Panc1 (cell line): ENCODE measurements at regions of chr17 and their contacts with region 1.

Region 1: DNA sequence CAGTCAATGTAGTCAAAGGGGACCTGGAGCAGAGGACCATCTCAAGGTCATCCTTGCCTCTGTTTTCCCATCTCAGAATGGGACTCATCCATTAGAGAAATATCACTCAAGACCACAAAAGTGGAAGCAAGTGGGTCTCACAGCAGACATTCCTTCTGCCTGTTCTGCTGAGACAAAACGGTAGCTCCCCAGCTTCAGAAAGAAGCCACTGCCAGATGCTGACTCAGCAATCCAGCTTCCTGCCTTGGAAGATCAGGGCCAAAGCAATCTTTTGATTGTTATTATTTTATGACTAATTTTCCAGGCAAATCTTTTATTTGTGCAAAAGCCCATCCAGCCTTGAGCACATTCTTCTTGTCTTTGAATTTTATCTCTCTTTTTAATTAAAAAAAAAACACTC is 86.8 kb downstream of the CCT6B start:
- DNase-seq: no peak
- ATAC-seq: no peak
- H3K4me3 ChIP-seq: no peak overlapping the region
- H3K27ac ChIP-seq: no peak overlapping the region
- H3K4me1 ChIP-seq: no peaks in the 10 kb centered on the region
- H3K27me3 ChIP-seq: no peaks in the 10 kb centered on the region; the same call in 1 of the 2 replicates
- CTCF ChIP-seq: no peak

Region 2: DNA sequence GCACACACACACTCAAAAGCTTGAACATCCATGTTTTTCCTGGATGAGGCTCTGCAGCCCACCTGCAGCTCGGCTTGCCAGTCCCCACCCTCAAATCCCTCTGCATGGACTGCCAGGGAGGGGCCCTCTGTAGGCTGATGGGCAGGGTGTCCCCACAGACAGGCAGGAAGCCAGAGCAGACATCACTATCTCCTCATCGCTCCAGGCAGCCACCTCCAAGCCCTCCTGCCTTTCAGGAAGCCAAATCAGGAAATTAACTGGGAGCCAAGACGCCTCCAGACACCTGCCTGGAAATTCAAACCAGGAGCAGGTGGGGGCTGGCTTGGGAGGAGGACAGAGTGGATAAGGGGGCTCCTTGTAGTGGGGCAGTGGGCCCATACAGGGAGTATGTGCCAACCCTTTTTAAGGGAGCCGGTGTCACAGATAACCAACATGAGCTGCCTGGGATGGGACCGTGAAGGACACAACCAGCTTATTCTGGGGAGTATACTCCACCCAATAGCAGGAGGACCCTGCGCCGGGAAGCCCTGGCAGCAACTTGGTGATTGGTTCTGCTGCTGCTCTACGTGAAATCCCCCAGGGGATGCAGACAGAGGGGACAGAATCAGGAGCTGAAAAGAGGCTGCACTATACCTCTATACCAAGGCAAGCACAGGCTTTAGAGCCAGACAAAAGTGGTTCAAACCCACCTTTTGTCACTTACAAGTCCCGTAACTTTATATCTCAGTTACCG is 52.3 kb before region 1 on chr17:
- CTCF ChIA-PET with region 1: interaction called, 10 read pairs
- POLR2A ChIA-PET with region 1: no interaction called
- in situ Hi-C with region 1: no loop called
- intact Hi-C with region 1: no loop called
- DNase-seq: no peak
- ATAC-seq: no peak
- H3K4me3 ChIP-seq: no peak overlapping the region
- H3K27ac ChIP-seq: no peak overlapping the region
- H3K4me1 ChIP-seq: no peaks in the 10 kb centered on the region; the same call in 1 of the 2 replicates
- H3K27me3 ChIP-seq: no peaks in the 10 kb centered on the region; the same call in 1 of the 2 replicates
- CTCF ChIP-seq: no peak

Region 3: DNA sequence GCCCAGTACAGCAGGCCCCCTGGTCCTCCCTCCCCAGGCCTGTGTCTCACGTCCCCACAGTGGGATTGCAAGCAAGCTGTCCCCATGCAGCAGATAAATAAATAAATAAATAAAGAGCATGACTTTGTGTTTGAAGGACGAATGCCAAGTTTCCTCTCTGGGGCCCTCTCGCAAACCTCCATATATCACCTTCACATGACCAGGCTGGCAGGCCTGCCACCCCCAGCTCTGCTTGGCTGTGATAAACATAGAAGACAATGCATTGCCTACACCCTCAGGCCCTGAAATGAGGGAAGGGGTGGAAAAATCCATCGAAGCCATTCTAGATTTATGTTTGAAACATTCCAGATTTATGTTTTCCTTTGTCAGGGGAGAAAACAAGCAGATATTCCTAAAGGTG is 20.6 kb before region 1 on chr17:
- CTCF ChIA-PET with region 1: no interaction called
- POLR2A ChIA-PET with region 1: no interaction called
- in situ Hi-C with region 1: no loop called
- intact Hi-C with region 1: loop called (anchors 2 kb)
- DNase-seq: no peak
- ATAC-seq: no peak
- H3K4me3 ChIP-seq: no peak overlapping the region
- H3K27ac ChIP-seq: no peak overlapping the region
- H3K4me1 ChIP-seq: no peaks in the 10 kb centered on the region
- H3K27me3 ChIP-seq: peaks cover 4% of the 10 kb centered on the region
- CTCF ChIP-seq: no peak

Region 4: DNA sequence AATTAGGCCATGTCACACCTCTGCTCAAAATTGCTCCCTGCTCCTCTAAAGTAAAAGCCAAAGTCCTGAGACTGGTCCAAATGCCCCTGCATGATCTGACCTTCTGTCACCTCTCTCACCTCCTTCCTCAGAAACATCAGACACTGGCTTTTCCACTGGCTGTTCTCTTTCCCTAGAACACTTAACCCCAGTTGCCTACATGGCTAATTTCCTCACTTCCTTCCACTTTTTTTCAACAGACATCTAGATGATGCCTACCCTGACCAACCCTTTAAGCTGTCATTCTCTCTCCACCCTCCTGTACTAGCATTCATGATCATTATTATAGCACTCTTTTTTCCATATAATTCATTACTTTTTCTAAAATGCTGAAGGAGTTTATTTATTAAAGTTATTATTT is 55.8 kb after region 1 on chr17:
- CTCF ChIA-PET with region 1: no interaction called
- POLR2A ChIA-PET with region 1: no interaction called
- in situ Hi-C with region 1: no loop called
- intact Hi-C with region 1: no loop called
- DNase-seq: no peak
- ATAC-seq: no peak
- H3K4me3 ChIP-seq: no peak overlapping the region
- H3K27ac ChIP-seq: no peak overlapping the region
- H3K4me1 ChIP-seq: no peaks in the 10 kb centered on the region
- H3K27me3 ChIP-seq: 0 out of 2 replicates have a peak, but pooled peaks cover 3% of the 10 kb centered on the region
- CTCF ChIP-seq: no peak